Naive thymus-derived CD4-positive, alpha-beta T cell (primary cell): ENCODE measurements at regions of chr2 and their contacts with region 1.

Region 1: DNA sequence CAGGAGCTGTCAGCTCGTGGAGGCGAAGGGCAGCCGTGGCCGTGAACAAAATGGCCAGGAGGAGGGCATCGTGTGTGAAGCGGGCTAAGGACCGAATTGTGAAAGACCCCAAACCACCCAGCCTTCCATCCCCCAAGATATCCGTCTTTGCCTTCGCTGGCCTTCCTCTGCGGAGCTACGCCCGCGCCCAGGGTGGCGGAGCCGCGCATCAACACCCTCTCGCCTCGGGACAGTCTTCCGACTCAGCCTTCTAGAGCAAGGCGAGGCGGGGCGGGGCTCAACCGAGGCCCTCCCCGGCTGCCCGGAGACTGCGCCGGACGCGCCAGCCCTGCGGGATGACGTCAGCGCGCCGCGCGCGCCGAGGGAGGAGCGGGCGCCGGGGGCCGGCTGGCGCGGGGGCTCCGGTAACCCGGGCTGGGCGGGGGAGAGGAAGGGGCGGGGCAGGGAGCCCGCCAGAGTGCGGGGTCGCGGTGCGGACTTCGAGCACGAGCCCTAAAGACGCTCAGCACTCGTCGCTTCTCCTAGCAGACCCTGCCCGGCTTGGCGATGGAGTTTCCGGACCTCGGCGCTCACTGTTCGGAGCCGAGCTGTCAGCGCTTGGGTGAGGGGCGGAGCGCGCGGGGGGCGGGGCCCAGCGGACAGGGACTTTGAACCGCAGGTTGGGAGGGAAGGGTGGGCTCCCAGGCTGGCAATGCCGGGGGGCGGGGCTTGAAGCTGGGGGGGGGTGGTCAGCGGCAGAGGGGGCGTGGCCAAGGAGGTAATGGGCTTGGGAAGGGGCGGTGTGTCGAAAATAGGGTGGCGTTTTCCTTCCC is at the start of gene ZFAND2B:
- DNase-seq: peak; percentile 92 to 98 (median 96)
- ATAC-seq: peak; percentile 96
- H3K4me3 ChIP-seq: peak within 1 kb of the TSS; percentile 98
- H3K4me3 Mint-ChIP-seq: peak within 1 kb of the TSS; percentile 77 to 98 (median 94)
- H3K27ac ChIP-seq: peak within 1 kb of the TSS; percentile 92
- H3K27ac Mint-ChIP-seq: peak within 1 kb of the TSS; percentile 96 to 99 (median 97)
- H3K4me1 ChIP-seq: peaks cover 20 to 28% of the 10 kb centered on the region in 2 donors
- H3K4me1 Mint-ChIP-seq: peaks cover 15 to 48% (median 43%) of the 10 kb centered on the region in 7 donors
- H3K27me3 ChIP-seq: no peaks in the 10 kb centered on the region
- H3K27me3 Mint-ChIP-seq: no peaks in the 10 kb centered on the region
- total RNA-seq, gene ZFAND2B: 50.1 to 79.5 (median 71.3) TPM

Region 2: DNA sequence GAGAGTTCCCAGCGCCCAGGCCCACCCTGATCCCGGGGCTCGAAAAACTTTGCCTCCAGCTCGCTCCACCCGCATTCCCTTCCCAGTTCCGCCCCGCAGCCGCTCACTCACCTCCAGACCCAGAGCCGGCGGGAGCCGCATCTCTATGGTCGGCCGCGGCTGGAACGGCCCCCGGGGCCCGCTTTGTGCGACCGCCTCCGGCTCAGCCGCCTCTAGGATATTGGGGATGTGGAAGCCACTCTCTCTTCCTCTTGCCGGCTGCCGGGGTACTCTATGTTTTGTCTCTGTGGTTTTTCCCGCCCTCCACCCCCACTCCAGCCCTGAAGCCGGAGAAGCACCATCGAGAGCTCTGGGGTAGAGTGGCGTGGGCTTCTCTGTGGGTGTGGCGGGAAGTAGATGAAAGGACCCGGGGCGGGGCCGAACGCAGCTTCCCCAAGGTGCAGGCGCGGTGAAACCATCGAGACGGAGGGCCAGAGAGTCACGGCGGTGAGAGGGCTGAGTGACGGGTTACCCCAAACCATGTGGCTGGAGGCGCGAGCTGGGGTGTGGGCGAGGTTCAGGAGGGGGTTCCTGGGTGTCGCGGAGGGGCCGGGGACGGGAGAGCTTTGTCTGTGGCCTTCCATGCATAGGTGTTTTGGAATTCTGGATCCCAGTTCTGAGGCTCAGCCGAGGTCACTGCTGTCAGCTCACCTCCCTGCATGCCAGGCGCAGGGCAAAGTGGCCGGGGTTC is 547.2 kb before region 1 on chr2 and contains the starts of genes BCS1L and ZNF142:
- CTCF ChIA-PET with region 1: no interaction called
- POLR2A ChIA-PET with region 1: no interaction called
- intact Hi-C with region 1: loop called in 1 of 2 experiments (anchors 1 kb)
- DNase-seq: peak; percentile 75 to 95 (median 90)
- ATAC-seq: peak; percentile 99
- H3K4me3 ChIP-seq: peak within 1 kb of the TSS; percentile 83
- H3K4me3 Mint-ChIP-seq: peak within 1 kb of the TSS; percentile 90 to 99 (median 98)
- H3K27ac ChIP-seq: peak within 1 kb of the TSS; percentile 80
- H3K27ac Mint-ChIP-seq: peak within 1 kb of the TSS; percentile 74 to 96 (median 93)
- H3K4me1 ChIP-seq: peaks cover 7 to 15% of the 10 kb centered on the region in 2 donors
- H3K4me1 Mint-ChIP-seq: peaks cover 25 to 45% (median 38%) of the 10 kb centered on the region in 7 donors
- H3K27me3 ChIP-seq: no peaks in the 10 kb centered on the region
- H3K27me3 Mint-ChIP-seq: no peaks in the 10 kb centered on the region
- total RNA-seq, gene BCS1L: 21.4 to 62.0 (median 49.0) TPM
- total RNA-seq, gene ZNF142: 38.7 to 49.8 (median 40.8) TPM

Region 3: GRCh38 chr2:219057709-219058540 is 148.7 kb before region 1 on chr2:
- CTCF ChIA-PET with region 1: no interaction called
- POLR2A ChIA-PET with region 1: no interaction called
- intact Hi-C with region 1: loop called (anchors 1 kb)
- DNase-seq: peak; percentile 45 to 82 (median 68)
- ATAC-seq: peak; percentile 94
- H3K4me3 ChIP-seq: peak overlapping the region; percentile 27
- H3K4me3 Mint-ChIP-seq: peak overlapping the region; percentile 40 to 82 (median 57)
- H3K27ac ChIP-seq: no peak overlapping the region
- H3K27ac Mint-ChIP-seq: no peak overlapping the region
- H3K4me1 ChIP-seq: peaks cover 3 to 27% of the 10 kb centered on the region in 2 donors
- H3K4me1 Mint-ChIP-seq: peaks cover 8 to 22% (median 16%) of the 10 kb centered on the region in 7 donors
- H3K27me3 ChIP-seq: peaks cover 15 to 16% of the 10 kb centered on the region in 2 donors
- H3K27me3 Mint-ChIP-seq: peaks cover 50 to 75% (median 53%) of the 10 kb centered on the region in 5 donors

Region 4: GRCh38 chr2:219218732-219219701 is 12.4 kb after region 1 on chr2 and contains the start of gene ABCB6:
- CTCF ChIA-PET with region 1: no interaction called
- POLR2A ChIA-PET with region 1: interaction called, 21 read pairs
- intact Hi-C with region 1: loop called (anchors 1 kb)
- DNase-seq: peak; percentile 72 to 90 (median 85)
- ATAC-seq: peak; percentile 92
- H3K4me3 ChIP-seq: peak within 1 kb of the TSS; percentile 60
- H3K4me3 Mint-ChIP-seq: peak within 1 kb of the TSS; percentile 78 to 89 (median 82)
- H3K27ac ChIP-seq: peak within 1 kb of the TSS; percentile 65
- H3K27ac Mint-ChIP-seq: peak within 1 kb of the TSS; percentile 61 to 86 (median 79)
- H3K4me1 ChIP-seq: peaks cover 13 to 14% of the 10 kb centered on the region in 2 donors
- H3K4me1 Mint-ChIP-seq: peaks cover 0 to 29% (median 24%) of the 10 kb centered on the region in 7 donors
- H3K27me3 ChIP-seq: no peaks in the 10 kb centered on the region
- H3K27me3 Mint-ChIP-seq: no peaks in the 10 kb centered on the region
- total RNA-seq, gene ABCB6: 4.1 to 30.2 (median 8.3) TPM

Region 5: DNA sequence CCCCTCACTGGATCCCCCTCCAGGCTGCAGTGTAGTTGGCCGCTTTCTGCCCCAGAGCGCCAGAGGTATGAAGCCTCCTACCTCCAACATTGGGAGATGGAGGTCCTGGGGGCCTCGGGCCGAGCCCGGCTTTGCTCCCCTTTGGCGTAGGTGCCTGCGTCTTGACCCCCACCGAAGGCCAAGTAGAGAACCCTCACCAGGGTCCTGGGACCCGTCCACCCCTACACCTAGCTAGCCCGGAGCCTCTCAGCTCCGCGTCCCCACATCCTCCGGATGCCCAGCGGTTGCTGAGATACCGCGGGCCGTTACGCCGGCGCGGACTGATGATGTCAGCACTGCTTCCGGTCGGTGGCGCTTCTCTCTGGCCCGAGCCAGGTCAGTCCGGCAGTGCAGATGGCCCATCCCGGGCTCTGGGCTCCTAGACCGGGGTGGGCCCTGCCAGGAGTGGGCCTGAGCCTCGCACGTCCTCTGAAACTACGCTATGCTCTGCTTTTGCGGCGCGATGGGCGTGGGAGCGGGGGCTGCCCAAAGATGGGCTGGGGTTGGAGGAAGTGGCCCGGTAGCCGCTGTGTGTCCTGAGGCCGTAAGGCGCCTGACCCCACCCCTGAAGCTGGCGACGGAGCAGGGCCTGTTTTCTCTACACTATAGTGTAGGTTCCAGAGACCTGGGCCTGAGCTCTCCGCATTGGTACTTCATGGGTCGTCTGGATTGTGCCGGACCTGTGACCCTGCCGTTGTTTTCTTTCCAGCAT is 38.7 kb after region 1 on chr2 and contains the starts of genes GLB1L and STK16:
- CTCF ChIA-PET with region 1: interaction called, 7 read pairs
- POLR2A ChIA-PET with region 1: interaction called, 27 read pairs
- intact Hi-C with region 1: loop called (anchors 1 to 2 kb)
- DNase-seq: peak; percentile 76 to 95 (median 85)
- ATAC-seq: peak; percentile 80
- H3K4me3 ChIP-seq: peak within 1 kb of the TSS; percentile 92
- H3K4me3 Mint-ChIP-seq: peak within 1 kb of the TSS; percentile 82 to 100 (median 93)
- H3K27ac ChIP-seq: peak within 1 kb of the TSS; percentile 89
- H3K27ac Mint-ChIP-seq: peak within 1 kb of the TSS; percentile 88 to 99 (median 97)
- H3K4me1 ChIP-seq: peaks cover 52 to 53% of the 10 kb centered on the region in 2 donors
- H3K4me1 Mint-ChIP-seq: peaks cover 26 to 73% (median 59%) of the 10 kb centered on the region in 7 donors
- H3K27me3 ChIP-seq: no peaks in the 10 kb centered on the region
- H3K27me3 Mint-ChIP-seq: peaks cover 0 to 2% (median 0%) of the 10 kb centered on the region in 5 donors
- total RNA-seq, gene GLB1L: 1.9 to 4.5 (median 2.7) TPM
- total RNA-seq, gene STK16: 17.4 to 35.0 (median 21.8) TPM

Region 6: DNA sequence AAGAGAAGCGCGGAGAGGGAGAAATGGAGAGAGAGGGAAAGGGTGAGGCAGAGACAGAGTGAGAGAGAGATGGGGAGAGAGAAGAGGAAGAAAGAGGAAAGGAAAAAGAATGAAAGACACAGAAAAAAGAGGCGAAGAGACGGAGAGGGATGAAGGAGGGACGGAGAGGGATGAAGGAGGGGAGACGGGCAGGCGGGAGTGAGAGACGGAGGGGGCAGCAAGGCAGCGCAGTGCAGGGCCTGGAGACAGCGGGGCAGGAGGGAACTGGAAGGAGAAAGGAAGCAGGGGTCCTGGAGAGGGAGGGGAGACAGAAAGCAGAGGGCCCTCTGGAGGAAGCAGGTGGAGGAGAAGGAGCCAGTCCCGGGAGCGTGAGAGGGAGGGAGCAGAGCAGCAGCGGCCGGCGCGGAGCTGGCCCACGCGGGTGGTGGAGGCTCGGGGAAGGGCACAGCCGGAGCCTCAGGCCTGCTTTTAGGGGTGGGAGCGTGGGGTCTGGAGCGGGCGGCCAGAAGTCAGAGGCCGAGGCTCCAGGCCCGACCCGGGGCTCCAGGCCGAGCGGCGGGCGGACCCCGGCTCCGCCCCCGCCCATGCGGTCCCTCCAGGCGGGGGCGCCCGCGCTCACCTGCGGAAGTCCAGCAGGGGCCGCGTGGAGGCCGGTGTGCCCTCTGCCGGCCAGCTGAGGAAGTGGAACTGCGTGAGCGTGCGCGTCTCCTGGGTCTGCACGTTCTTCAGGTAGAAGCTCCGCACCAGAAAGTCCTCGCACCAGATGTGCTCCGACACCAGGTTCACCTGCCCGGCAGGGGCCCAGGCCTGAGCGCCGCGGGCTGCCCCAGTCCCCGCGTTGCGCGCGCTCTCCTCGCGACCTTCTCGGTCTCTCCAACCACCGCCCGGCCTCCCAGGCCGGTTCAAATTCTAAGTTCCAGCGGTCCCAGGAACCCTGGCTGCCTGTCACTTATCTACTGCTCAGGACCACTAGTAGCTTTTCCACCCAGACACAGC is 88.0 kb after region 1 on chr2:
- CTCF ChIA-PET with region 1: interaction called, 3 read pairs
- POLR2A ChIA-PET with region 1: interaction called, 8 read pairs
- intact Hi-C with region 1: loop called in 1 of 2 experiments (anchors 1 kb)
- DNase-seq: peak; percentile 80 to 93 (median 90)
- ATAC-seq: peak; percentile 99
- H3K4me3 ChIP-seq: peak overlapping the region; percentile 47
- H3K4me3 Mint-ChIP-seq: peak overlapping the region; percentile 68 to 89 (median 82)
- H3K27ac ChIP-seq: peak overlapping the region; percentile 79
- H3K27ac Mint-ChIP-seq: peak overlapping the region; percentile 56 to 88 (median 84)
- H3K4me1 ChIP-seq: peaks cover 2 to 20% of the 10 kb centered on the region in 2 donors
- H3K4me1 Mint-ChIP-seq: peaks cover 11 to 34% (median 27%) of the 10 kb centered on the region in 7 donors
- H3K27me3 ChIP-seq: no peaks in the 10 kb centered on the region
- H3K27me3 Mint-ChIP-seq: peaks cover 0 to 9% (median 0%) of the 10 kb centered on the region in 5 donors

Region 7: DNA sequence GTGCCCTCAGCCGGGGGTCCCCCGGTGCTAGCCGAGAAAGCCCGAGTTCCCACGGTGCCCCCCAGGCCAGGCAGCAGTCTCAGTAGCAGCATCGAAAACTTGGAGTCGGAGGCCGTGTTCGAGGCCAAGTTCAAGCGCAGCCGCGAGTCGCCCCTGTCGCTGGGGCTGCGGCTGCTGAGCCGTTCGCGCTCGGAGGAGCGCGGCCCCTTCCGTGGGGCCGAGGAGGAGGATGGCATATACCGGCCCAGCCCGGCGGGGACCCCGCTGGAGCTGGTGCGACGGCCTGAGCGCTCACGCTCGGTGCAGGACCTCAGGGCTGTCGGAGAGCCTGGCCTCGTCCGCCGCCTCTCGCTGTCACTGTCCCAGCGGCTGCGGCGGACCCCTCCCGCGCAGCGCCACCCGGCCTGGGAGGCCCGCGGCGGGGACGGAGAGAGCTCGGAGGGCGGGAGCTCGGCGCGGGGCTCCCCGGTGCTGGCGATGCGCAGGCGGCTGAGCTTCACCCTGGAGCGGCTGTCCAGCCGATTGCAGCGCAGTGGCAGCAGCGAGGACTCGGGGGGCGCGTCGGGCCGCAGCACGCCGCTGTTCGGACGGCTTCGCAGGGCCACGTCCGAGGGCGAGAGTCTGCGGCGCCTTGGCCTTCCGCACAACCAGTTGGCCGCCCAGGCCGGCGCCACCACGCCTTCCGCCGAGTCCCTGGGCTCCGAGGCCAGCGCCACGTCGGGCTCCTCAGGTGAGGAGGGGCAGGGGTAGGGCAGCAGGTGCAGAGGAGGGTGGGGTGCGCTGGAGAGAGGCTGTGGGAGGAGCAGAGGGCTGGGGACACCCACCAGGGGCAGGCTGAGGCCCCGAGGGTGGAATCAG is 277.9 kb after region 1 on chr2:
- CTCF ChIA-PET with region 1: no interaction called
- POLR2A ChIA-PET with region 1: no interaction called
- intact Hi-C with region 1: no loop called
- DNase-seq: peak in 1 of 9 donors; percentile 12
- ATAC-seq: peak; percentile 23
- H3K4me3 ChIP-seq: peak overlapping the region; percentile 17
- H3K4me3 Mint-ChIP-seq: peak overlapping the region in 9 of 10 donors; percentile 65 to 83 (median 72)
- H3K27ac ChIP-seq: no peak overlapping the region
- H3K27ac Mint-ChIP-seq: no peak overlapping the region
- H3K4me1 ChIP-seq: no peaks in the 10 kb centered on the region
- H3K4me1 Mint-ChIP-seq: peaks cover 0 to 6% (median 0%) of the 10 kb centered on the region in 7 donors
- H3K27me3 ChIP-seq: no peaks in the 10 kb centered on the region
- H3K27me3 Mint-ChIP-seq: peaks cover 19 to 50% (median 31%) of the 10 kb centered on the region in 5 donors

Region 8: GRCh38 chr2:219912491-219912921 is 705.9 kb after region 1 on chr2:
- CTCF ChIA-PET with region 1: no interaction called
- POLR2A ChIA-PET with region 1: no interaction called
- intact Hi-C with region 1: no loop called
- DNase-seq: no peak
- ATAC-seq: no peak
- H3K4me3 ChIP-seq: no peak overlapping the region
- H3K4me3 Mint-ChIP-seq: no peak overlapping the region
- H3K27ac ChIP-seq: no peak overlapping the region
- H3K27ac Mint-ChIP-seq: no peak overlapping the region
- H3K4me1 ChIP-seq: no peaks in the 10 kb centered on the region
- H3K4me1 Mint-ChIP-seq: no peaks in the 10 kb centered on the region
- H3K27me3 ChIP-seq: no peaks in the 10 kb centered on the region
- H3K27me3 Mint-ChIP-seq: peaks cover 0 to 4% (median 3%) of the 10 kb centered on the region in 5 donors